Body of pancreas (tissue), 4 donors: ENCODE measurements at regions of chr2 and their contacts with region 1.

Region 1: DNA sequence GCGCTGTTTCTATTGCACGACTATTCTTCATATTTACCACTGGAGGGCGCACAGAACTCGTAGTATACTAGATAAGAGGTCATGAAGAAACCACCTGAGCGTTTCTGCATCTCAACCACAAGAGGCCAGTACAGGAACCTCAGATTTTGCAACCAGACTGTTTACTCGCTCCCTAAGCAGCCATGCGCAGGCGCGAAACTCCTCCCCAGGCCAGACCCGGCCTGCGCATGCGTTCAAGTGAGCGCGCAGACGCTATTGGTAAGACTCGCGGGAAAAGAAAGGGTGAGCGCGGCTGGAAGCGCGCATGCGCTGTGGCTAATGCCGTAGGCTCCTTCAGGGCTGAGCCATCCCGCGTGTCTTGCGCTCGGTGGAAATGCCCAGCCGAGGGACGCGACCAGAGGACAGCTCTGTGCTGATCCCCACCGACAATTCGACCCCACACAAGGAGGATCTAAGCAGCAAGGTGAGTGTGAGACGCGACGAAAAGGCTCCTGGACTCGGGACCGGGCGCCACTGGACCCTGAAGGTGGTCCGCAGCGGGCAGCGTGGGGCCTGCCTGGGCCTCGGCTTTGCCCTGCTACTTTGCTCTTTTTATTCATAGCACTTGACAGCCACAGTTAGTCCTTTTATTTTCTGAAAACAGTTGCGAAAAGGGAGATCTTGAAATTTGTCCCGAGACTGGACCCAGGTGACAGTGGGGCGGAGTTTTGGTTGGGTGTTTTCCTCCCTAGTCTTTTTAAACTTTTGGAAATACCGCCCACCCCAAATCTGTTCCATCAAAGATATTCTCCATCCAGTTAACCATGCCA is at the start of gene ASNSD1:
- DNase-seq: peak; percentile 99 to 100 (median 100)
- ATAC-seq: peak; percentile 100
- H3K4me3 ChIP-seq: peak within 1 kb of the TSS; percentile 61 to 96
- H3K27ac ChIP-seq: peak within 1 kb of the TSS in 3 of 4 donors; percentile 69 to 83 (median 75)
- H3K4me1 ChIP-seq: peaks cover 13% of the 10 kb centered on the region
- H3K27me3 ChIP-seq: no peaks in the 10 kb centered on the region
- CTCF ChIP-seq: peak; percentile 89 to 100 (median 100)
- POLR2A ChIP-seq: peak; percentile 58 to 90 (median 88)
- total RNA-seq, gene ASNSD1: 9.6 to 22.8 TPM

Region 2: GRCh38 chr2:189698020-189698887 is 36.9 kb after region 1 on chr2:
- intact Hi-C with region 1: loop called (anchors 5 kb)
- DNase-seq: peak; percentile 48 to 73 (median 58)
- ATAC-seq: peak; percentile 56
- H3K4me3 ChIP-seq: no peak overlapping the region
- H3K27ac ChIP-seq: no peak overlapping the region
- H3K4me1 ChIP-seq: peaks cover 5% of the 10 kb centered on the region
- H3K27me3 ChIP-seq: no peaks in the 10 kb centered on the region
- CTCF ChIP-seq: peak; percentile 41 to 74 (median 55)
- POLR2A ChIP-seq: no peak